ENCODE measurements at regions of chr17 and their contacts with region 1.

Region 1: DNA sequence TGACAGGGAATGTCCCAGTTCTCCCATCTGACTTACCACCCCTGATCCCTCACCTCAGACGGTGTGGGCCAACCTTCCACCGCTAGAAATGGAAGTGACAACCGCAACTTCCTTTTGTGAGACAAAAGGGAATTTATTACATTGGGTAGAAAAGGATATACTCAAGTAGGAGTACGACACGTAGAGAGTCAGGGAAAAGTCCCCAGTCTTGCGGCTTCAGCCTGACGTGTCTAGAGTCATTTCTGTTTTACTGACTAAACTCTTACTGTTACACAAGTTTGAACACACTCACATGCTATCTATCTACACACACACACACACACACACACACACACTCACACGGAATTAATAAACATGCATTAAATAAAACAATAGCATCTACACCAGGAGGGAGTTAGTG is 178.9 kb downstream of the COPRS start:
- DNase-seq: peak; percentile 80
- ATAC-seq: peak; percentile 93
- H3K4me3 Mint-ChIP-seq: peak overlapping the region; percentile 5
- H3K27ac Mint-ChIP-seq: peak overlapping the region; percentile 27
- H3K4me1 Mint-ChIP-seq: peaks cover 15% of the 10 kb centered on the region
- H3K27me3 Mint-ChIP-seq: peaks cover 41% of the 10 kb centered on the region

Region 2: GRCh38 chr17:31877911-31878702 is 198.0 kb after region 1 on chr17:
- CTCF ChIA-PET with region 1: no interaction called
- POLR2A ChIA-PET with region 1: no interaction called
- intact Hi-C with region 1: no loop called
- DNase-seq: peak; percentile 63
- ATAC-seq: peak; percentile 89
- H3K4me3 Mint-ChIP-seq: peak overlapping the region; percentile 23
- H3K27ac Mint-ChIP-seq: peak overlapping the region; percentile 94
- H3K4me1 Mint-ChIP-seq: peaks cover 25% of the 10 kb centered on the region
- H3K27me3 Mint-ChIP-seq: no peaks in the 10 kb centered on the region

Region 3: GRCh38 chr17:31907342-31907962 is 227.3 kb after region 1 on chr17:
- CTCF ChIA-PET with region 1: no interaction called
- POLR2A ChIA-PET with region 1: no interaction called
- intact Hi-C with region 1: loop called in 1 of 2 experiments (anchors 10 kb)
- DNase-seq: no peak
- ATAC-seq: no peak
- H3K4me3 Mint-ChIP-seq: no peak overlapping the region
- H3K27ac Mint-ChIP-seq: no peak overlapping the region
- H3K4me1 Mint-ChIP-seq: peaks cover 22% of the 10 kb centered on the region
- H3K27me3 Mint-ChIP-seq: peaks cover 9% of the 10 kb centered on the region

Measured in activated CD4-positive, alpha-beta T cell treated with anti-CD3 and anti-CD28 coated beads for 36 hours (primary cell).